ENCODE measurements at regions of chr15 and their contacts with region 1.

Region 1: GRCh38 chr15:37217567-37217966 is 117.2 kb upstream of the MEIS2 start:
- DNase-seq: no peak
- ATAC-seq: no peak
- H3K4me3 ChIP-seq: no peak overlapping the region
- H3K27ac ChIP-seq: no peak overlapping the region
- H3K4me1 ChIP-seq: no peaks in the 10 kb centered on the region
- H3K27me3 ChIP-seq: no peaks in the 10 kb centered on the region
- CTCF ChIP-seq: no peak

Region 2: GRCh38 chr15:37245358-37245757 is 27.8 kb after region 1 on chr15:
- CTCF ChIA-PET with region 1: no interaction called
- POLR2A ChIA-PET with region 1: no interaction called
- in situ Hi-C with region 1: no loop called
- intact Hi-C with region 1: loop called (anchors 2 kb)
- DNase-seq: no peak
- ATAC-seq: no peak
- H3K4me3 ChIP-seq: no peak overlapping the region
- H3K27ac ChIP-seq: no peak overlapping the region
- H3K4me1 ChIP-seq: no peaks in the 10 kb centered on the region
- H3K27me3 ChIP-seq: no peaks in the 10 kb centered on the region
- CTCF ChIP-seq: no peak